Sigmoid colon (tissue), 7 donors: ENCODE measurements at regions of chr1 and their contacts with region 1.

Region 1: GRCh38 chr1:8202182-8202905 is 115.6 kb upstream of the SLC45A1 start:
- DNase-seq: peak; percentile 95
- H3K4me3 ChIP-seq: peak overlapping the region in 3 of 4 donors; percentile 11 to 23 (median 12)
- H3K27ac ChIP-seq: peak overlapping the region; percentile 92 to 97 (median 95)
- H3K4me1 ChIP-seq: peaks cover 0 to 72% (median 67%) of the 10 kb centered on the region in 4 donors
- H3K27me3 ChIP-seq: no peaks in the 10 kb centered on the region
- CTCF ChIP-seq: no peak
- EP300 ChIP-seq: peak; percentile 60 to 94 (median 92)
- POLR2A ChIP-seq: no peak

Region 2: GRCh38 chr1:8026153-8026975 is 176.0 kb before region 1 on chr1 and contains the start of gene ERRFI1:
- intact Hi-C with region 1: loop called (anchors 5 kb)
- DNase-seq: peak; percentile 98
- H3K4me3 ChIP-seq: peak within 1 kb of the TSS; percentile 63 to 97 (median 84)
- H3K27ac ChIP-seq: peak within 1 kb of the TSS; percentile 96 to 99 (median 97)
- H3K4me1 ChIP-seq: peaks cover 3 to 61% (median 54%) of the 10 kb centered on the region in 4 donors
- H3K27me3 ChIP-seq: no peaks in the 10 kb centered on the region
- CTCF ChIP-seq: no peak
- EP300 ChIP-seq: no peak
- POLR2A ChIP-seq: peak; percentile 71 to 85
- total RNA-seq, gene ERRFI1: 81.1 to 131 (median 101) TPM

Region 3: DNA sequence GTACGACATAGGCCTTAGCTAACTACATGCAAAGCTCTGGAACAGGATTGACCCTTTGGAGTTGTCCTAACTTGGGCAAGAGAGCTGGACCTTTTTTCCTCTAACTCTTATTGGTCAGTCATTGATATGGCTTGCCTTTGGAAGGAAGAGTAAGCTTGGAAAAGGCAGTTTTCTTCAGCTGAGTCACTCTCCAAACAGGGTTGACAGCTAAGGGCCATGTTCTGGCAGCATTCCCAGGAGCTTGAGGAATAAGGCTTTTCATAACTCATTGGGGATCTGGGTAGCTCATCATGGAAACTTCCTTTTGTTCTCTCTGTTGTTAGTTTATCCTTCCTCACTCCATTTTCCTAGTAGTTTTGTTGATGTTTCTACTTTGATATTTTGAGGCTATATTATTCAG is 161.8 kb before region 1 on chr1:
- intact Hi-C with region 1: loop called (anchors 5 kb)
- DNase-seq: peak; percentile 92
- H3K4me3 ChIP-seq: no peak overlapping the region
- H3K27ac ChIP-seq: peak overlapping the region; percentile 71 to 81 (median 74)
- H3K4me1 ChIP-seq: peaks cover 0 to 3% (median 0%) of the 10 kb centered on the region in 4 donors
- H3K27me3 ChIP-seq: no peaks in the 10 kb centered on the region
- CTCF ChIP-seq: no peak
- EP300 ChIP-seq: peak in 1 of 4 donors; percentile 9
- POLR2A ChIP-seq: no peak

Region 4: DNA sequence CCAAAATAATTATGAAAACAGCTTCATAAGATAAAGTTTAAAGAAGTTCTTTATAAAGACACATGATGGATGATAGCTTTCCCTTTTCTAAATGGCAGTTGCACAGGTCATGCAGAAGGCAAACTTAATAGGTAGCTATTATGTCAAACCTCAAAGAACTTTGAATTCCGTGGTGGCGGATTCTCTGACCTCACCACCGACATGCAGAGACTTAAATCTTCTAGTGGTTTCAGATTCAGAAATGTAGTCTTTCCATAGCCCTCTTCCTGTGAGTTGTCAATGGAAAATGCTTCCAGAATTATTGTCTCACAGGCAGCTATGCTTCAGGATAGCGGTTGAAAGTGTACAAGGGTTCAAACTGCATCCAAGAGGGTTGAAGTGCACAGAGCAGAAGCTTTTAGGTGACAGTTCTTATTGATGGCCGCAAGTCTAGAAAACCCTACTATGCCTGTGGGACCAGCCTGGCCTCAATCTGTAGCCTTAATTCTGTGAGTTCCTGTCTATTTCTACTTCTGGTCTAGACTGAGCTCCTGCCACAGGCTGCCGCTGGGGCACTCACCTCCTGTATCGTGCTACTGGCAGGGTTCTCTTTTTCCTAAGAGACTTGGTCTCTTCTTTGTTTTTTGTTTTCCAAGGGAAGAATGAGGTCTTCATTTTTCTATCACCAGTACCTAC is 59.3 kb before region 1 on chr1:
- intact Hi-C with region 1: no loop called
- DNase-seq: no peak
- H3K4me3 ChIP-seq: no peak overlapping the region
- H3K27ac ChIP-seq: peak overlapping the region; percentile 30 to 73 (median 54)
- H3K4me1 ChIP-seq: peaks cover 0 to 21% (median 12%) of the 10 kb centered on the region in 4 donors
- H3K27me3 ChIP-seq: no peaks in the 10 kb centered on the region
- CTCF ChIP-seq: no peak
- EP300 ChIP-seq: no peak
- POLR2A ChIP-seq: no peak